ENCODE measurements at regions of chr3 and their contacts with region 1.

Region 1: DNA sequence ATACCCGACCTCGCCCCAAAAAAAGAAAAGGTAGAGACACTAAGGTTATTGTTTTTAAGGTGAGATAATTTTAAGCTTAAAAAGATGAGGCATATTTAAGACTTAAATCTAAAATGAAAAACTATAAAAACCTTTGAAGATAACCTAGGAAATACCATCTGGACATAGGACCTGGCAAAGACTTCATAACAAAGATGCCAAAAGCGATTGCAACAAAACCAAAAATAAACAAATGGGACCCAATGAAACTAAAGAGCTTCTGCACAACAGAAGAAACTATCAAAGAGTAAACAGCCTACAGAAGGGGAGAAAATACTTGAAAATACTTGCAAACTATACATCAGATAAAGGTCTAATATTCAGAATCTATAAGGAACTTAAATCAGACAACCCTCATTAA is 80.9 kb downstream of the TMCC1 start:
- DNase-seq: no peak
- ATAC-seq: no peak

Region 2: GRCh38 chr3:129635656-129636055 is 176.9 kb before region 1 on chr3:
- intact Hi-C with region 1: loop called in 1 of 2 experiments (anchors 5 kb)
- DNase-seq: no peak
- ATAC-seq: no peak

Region 3: DNA sequence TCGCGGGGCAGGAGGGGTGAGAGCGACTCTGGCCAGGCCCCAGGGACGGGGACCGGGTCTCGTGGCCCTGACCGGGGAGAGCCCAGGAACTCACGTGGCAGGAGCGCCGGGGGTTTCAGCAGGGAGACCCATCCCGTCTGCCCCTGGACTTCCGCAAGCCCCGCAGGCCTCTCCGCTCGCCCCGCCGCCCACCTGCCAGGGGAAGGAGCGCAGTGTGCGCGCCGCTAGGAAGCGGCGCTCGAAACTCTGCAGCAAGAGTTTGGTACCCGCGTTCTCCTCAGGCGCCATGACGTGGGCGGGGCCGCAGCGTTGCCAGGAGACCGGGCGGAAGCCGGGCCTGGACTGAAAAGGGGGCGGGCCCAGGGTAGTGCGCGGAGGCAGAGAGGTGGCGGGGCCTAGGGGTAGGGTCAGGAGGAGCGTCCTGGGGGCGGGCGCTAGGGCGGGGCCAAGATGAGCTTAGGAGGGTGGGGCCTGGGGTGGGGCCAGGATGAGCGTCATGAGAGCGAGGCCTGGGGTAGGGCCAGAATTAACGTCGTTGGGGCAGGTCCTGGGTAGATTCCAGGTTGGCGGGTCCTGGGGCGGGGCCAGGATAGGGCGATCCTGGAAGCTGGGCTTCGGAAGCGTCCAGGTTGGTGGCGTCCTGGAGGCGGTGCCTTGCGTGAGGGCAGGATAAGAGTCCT is 298.7 kb after region 1 on chr3:
- intact Hi-C with region 1: no loop called
- DNase-seq: peak; percentile 99 to 100
- ATAC-seq: peak; percentile 100